BJ (cell line): ENCODE measurements at regions of chr1 and their contacts with region 1.

Region 1: DNA sequence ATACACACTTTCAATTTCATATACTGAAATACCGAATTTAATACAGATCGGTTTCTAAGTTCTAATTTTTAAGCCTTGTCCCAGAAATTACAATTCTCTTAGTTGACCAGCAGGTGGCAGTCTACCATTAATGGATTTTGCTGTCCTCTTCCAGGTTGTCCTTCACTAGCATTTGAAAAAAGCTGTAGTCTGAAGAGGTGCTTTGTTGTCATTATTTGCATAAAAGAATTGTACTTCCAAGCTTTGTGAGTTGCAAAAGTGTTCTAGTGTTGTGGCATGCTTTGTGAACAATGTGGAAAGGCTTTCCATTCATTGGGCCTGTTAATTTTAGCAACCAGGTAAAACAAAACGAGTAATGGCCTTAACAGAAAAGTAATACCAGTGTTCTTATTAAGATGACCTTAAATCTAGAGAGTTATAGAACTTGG is 193.6 kb downstream of the RPS6KC1 start:
- DNase-seq: peak; percentile 4
- H3K4me3 ChIP-seq: no peak overlapping the region
- H3K27me3 ChIP-seq: no peaks in the 10 kb centered on the region
- CTCF ChIP-seq: peak; percentile 71

Region 2: DNA sequence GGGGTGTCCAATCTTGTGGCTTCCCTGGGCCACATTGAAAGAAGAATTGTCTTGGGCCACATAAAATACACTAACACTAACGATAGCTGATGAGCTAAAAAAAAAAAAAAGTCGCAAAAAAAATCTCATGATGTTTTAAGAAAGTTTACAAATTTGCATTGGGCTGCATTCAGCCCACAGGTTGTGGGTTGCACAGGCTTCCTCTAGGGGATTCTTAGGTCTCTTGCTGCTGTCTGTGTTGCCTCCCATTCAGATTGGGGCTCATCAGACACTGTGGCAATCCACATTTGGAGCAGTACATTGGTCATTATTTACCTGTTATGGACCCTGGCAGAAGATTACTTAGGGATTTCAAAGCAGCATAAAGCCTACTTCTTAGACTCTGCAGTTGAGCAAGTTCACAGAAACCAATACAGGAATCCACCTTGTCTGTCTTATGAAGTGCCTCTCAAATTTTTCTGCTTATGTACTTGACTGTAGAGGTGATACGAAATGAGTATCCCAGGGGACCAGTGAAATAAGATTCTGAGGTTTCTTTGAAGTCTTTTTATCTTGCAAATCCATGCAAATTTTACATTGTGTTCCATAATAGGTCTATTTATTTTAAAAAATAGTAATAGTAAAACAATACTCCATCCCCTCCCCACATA is 11.9 kb after region 1 on chr1:
- CTCF ChIA-PET with region 1: interaction called, 11 read pairs
- POLR2A ChIA-PET with region 1: no interaction called
- DNase-seq: no peak
- H3K4me3 ChIP-seq: no peak overlapping the region
- H3K27me3 ChIP-seq: no peaks in the 10 kb centered on the region
- CTCF ChIP-seq: no peak